Activated naive CD4-positive, alpha-beta T cell treated with anti-CD3 and anti-CD28 coated beads for 36 hours (primary cell): ENCODE measurements at regions of chr13 and their contacts with region 1.

Region 1: GRCh38 chr13:30551189-30551588 is 66.5 kb upstream of the USPL1 start:
- DNase-seq: peak; percentile 30
- H3K4me3 Mint-ChIP-seq: no peak overlapping the region
- H3K27ac Mint-ChIP-seq: no peak overlapping the region
- H3K4me1 Mint-ChIP-seq: peaks cover 2% of the 10 kb centered on the region
- H3K27me3 Mint-ChIP-seq: no peaks in the 10 kb centered on the region

Region 2: DNA sequence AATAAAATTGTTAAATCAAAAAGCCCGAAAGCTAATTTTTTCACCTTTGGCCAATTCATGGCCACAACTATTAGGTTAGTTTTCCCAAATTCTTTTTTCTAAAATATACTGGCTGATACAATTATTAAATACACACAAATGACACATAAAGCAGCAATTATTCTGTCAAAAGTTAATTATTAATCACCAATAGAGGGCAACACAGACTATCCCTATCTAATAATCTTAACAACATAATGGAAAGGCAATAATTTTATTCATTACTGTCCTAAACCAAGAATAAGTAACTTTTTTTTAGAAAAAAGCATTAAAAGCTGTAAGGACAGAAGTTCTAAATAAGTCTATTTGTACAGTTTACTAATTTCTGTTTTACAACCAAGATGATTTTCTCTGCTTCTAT is 295.5 kb before region 1 on chr13:
- CTCF ChIA-PET with region 1: no interaction called
- intact Hi-C with region 1: loop called (anchors 2 kb)
- DNase-seq: no peak
- H3K4me3 Mint-ChIP-seq: no peak overlapping the region
- H3K27ac Mint-ChIP-seq: no peak overlapping the region
- H3K4me1 Mint-ChIP-seq: peaks cover 20% of the 10 kb centered on the region
- H3K27me3 Mint-ChIP-seq: no peaks in the 10 kb centered on the region

Region 3: GRCh38 chr13:30355384-30355699 is 195.8 kb before region 1 on chr13:
- CTCF ChIA-PET with region 1: no interaction called
- intact Hi-C with region 1: loop called (anchors 1 kb)
- DNase-seq: peak; percentile 45
- H3K4me3 Mint-ChIP-seq: no peak overlapping the region
- H3K27ac Mint-ChIP-seq: no peak overlapping the region
- H3K4me1 Mint-ChIP-seq: peaks cover 20% of the 10 kb centered on the region
- H3K27me3 Mint-ChIP-seq: no peaks in the 10 kb centered on the region

Region 4: GRCh38 chr13:30659980-30660379 is 108.8 kb after region 1 on chr13:
- CTCF ChIA-PET with region 1: no interaction called
- intact Hi-C with region 1: no loop called
- DNase-seq: no peak
- H3K4me3 Mint-ChIP-seq: no peak overlapping the region
- H3K27ac Mint-ChIP-seq: no peak overlapping the region
- H3K4me1 Mint-ChIP-seq: peaks cover 2% of the 10 kb centered on the region
- H3K27me3 Mint-ChIP-seq: no peaks in the 10 kb centered on the region